ENCODE measurements at regions of chr6 and their contacts with region 1.

Region 1: DNA sequence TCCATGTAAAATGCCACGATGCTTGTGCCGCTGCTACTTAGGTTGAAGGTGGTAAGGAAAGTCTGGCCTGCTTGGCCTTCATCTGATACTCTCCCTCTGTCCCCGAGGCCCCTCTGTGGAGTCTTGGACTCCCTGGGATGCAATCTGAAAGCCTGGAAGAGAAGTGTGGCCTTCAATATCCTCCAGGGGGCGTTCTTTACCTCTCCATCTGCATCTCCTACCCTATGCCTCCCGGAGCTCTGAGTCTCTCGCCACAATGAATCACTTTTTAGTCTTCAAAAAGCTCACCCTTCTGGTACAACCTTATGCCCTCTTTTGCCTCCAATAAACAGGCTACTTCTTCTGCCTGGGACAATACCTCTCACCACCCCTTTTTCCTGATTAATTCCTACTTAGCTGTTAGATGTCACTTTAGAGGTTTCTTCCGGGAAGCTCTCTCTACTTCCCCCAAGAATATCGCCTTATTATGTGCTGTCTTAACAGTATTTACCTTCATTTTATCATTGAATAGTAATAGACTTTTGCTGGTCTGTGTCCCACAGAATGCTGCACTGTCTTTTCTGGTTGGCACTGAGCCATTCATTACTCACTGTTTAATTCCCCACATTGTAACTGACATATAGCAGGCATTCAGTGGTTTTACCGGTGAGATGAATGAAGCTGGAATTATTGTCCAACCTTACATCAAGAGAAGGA is 13.9 kb upstream of the ATG5 start:
- DNase-seq: peak; percentile 65 to 75
- H3K4me3 ChIP-seq: no peak overlapping the region
- H3K27ac ChIP-seq: peak overlapping the region; percentile 18; the same call in 1 of the 2 replicates
- H3K4me1 ChIP-seq: peaks cover 9% of the 10 kb centered on the region
- H3K27me3 ChIP-seq: no peaks in the 10 kb centered on the region
- CTCF ChIP-seq: peak; percentile 90

Region 2: GRCh38 chr6:106056060-106056745 is 283.3 kb before region 1 on chr6:
- CTCF ChIA-PET with region 1: no interaction called
- POLR2A ChIA-PET with region 1: no interaction called
- intact Hi-C with region 1: no loop called
- DNase-seq: no peak
- H3K4me3 ChIP-seq: no peak overlapping the region
- H3K27ac ChIP-seq: no peak overlapping the region
- H3K4me1 ChIP-seq: no peaks in the 10 kb centered on the region
- H3K27me3 ChIP-seq: no peaks in the 10 kb centered on the region
- CTCF ChIP-seq: no peak

Region 3: DNA sequence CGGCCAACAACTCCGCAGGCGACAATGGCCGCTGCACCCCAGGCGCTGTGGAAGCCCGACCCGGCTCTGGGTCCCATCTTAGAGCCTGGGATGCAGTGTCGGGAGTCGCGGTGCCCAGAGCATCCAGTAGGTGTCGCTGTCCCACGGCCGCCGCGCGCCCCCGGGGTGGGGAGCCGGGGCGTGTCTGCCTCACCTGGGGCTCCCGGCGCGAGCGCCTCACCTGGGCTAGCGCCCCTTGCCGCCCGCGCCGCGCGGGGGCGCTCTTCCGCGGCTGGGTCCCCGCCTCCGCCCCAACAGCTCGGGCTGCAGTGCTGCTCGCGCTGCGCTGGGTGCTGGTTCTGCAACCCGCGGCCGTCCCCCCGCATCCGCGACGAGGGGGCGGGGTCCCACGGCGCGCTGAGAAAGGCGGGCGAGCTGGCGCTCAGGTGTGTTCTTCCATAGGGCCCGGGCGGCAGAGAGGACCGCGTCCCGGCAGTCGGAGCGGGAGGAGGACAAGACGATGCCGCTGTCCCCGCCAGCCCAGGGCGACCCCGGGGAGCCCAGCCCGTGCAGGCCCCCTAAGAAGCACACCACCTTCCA is 21.0 kb after region 1 on chr6 and contains the start of gene CRYBG1:
- CTCF ChIA-PET with region 1: interaction called, 4 read pairs
- POLR2A ChIA-PET with region 1: interaction called, 6 read pairs
- intact Hi-C with region 1: loop called (anchors 1 kb)
- DNase-seq: peak; percentile 75 to 94
- H3K4me3 ChIP-seq: peak within 1 kb of the TSS; percentile 86
- H3K27ac ChIP-seq: peak within 1 kb of the TSS; percentile 34; the same call in 1 of the 2 replicates
- H3K4me1 ChIP-seq: peaks cover 11% of the 10 kb centered on the region
- H3K27me3 ChIP-seq: no peaks in the 10 kb centered on the region
- CTCF ChIP-seq: peak; percentile 93
- total RNA-seq, gene CRYBG1: 42.7 and 49.3 TPM in 2 replicates

Region 4: DNA sequence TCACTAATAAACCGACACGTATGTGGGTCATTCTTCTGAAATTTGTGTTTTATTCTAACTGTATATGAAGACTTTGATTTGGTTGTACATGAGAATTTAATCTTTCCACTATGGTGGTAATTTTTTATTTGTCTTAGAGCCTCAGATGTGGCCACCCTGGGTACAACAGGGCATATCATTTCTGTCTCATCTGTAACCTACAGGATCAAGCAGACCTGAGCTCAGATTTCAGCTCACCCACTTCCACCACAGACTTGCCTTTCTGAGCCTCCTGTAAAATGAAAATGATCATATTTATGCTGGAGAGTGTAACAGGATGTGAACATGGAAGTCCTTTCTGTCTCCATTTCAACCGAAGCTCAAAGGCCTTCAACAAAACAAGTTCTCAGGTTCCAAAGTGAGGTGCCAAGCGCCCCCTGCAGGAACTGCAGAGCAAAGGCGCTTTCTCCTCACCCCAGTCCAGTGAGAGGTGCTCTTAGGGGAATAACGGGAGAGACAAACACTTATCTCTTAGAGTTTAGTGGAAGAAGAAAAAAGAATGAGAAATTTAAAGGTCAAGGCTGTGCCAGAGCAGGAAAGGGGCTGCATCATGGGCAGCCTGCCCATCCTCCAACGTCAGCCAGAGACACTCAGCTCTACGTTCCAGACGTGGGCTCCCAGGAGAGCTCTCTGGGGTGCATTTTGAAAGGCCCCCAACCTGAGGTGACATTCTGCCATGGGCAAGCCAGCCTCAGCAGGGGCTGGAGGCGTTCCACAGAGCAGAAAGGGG is 658.1 kb after region 1 on chr6:
- CTCF ChIA-PET with region 1: interaction called, 8 read pairs
- POLR2A ChIA-PET with region 1: no interaction called
- intact Hi-C with region 1: loop called (anchors 5 kb)
- DNase-seq: peak; percentile 57
- H3K4me3 ChIP-seq: no peak overlapping the region
- H3K27ac ChIP-seq: no peak overlapping the region
- H3K4me1 ChIP-seq: no peaks in the 10 kb centered on the region
- H3K27me3 ChIP-seq: no peaks in the 10 kb centered on the region
- CTCF ChIP-seq: peak; percentile 94

Region 5: DNA sequence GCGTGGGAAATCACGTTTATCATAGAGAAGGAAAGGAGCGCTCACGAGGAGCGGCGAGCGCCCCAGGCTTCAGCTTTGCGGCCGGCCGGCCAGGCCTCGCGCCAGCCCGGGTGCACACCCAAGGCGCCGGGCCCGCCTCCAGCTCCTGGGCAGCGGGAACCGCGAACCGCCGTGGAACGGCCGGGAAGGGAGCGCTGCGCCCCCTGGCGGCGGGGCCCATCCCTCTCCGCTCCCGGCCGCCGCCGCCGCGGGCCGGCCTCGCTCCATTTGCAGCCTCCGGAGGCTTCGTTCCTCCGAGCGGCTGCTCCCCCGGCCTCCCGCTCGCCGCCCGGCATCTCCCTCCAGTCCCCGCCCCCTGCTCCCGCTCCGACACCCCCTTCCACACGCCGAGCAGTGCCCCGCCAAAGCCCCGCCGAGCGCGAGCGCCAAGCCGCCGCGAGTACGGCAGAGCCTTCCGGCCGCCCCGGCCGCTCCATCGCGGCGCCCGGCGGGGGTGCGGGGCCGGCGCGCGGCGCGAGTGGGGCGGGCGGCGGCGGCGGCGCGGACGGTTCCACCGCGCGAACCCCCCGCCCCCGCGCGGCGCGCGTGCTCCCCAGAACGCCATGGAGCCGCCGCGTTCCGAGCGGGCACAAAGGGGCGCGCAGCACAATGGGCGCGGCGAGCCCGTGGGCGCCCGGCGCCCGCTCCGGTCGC is 774.9 kb after region 1 on chr6:
- CTCF ChIA-PET with region 1: interaction called, 4 read pairs
- POLR2A ChIA-PET with region 1: no interaction called
- intact Hi-C with region 1: loop called (anchors 5 kb)
- DNase-seq: peak; percentile 61 to 87
- H3K4me3 ChIP-seq: peak overlapping the region; percentile 58
- H3K27ac ChIP-seq: no peak overlapping the region
- H3K4me1 ChIP-seq: peaks cover 8% of the 10 kb centered on the region; the same call in 1 of the 2 replicates
- H3K27me3 ChIP-seq: no peaks in the 10 kb centered on the region
- CTCF ChIP-seq: peak; percentile 65

Region 6: DNA sequence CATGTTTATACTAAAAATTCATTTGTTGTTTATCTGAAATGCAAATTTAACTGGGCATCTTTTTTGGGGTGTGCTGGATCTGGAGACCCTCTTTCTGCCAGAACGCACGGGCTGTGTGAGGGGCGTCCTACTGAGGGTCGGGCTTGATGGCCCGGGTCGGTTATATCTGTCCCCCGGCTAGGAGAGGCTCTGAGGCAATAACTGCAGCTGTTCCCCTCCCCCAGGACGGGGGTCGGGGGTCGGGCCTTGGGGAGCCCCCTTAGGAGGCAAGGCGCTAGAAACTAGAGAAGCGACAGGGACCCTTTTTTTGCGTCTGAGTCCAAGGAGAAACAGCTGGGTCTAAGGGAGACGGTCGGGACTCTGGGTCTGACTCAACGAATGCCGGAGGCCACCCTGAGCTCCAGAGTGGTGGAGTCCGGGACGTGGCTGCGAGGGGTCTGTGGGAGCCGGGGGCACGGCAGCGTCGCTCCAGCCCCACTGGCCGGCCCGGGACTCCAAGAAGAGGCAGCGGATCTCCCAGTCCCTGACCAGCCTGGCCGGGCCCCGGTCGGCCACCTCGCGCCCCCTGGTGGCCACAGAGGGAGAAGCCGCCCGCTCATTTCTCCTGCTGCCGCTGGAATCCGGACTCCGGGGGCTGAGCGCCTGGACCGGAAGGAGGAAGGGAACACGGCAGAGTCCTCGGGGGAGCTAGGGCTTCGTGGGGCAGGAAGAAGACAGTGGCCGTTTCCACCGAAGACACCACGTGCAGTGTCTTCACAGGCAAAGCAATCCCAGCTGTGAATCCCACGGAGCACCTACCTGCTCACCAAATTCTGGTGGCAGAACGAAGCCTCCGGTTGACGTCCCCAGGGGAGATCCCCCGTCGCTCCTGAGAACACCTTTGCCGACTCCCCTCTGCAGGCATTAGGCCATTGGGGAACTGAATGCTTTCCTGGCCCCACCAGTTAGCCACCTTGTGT is 1508.6 kb after region 1 on chr6:
- CTCF ChIA-PET with region 1: no interaction called
- POLR2A ChIA-PET with region 1: no interaction called
- intact Hi-C with region 1: loop called (anchors 5 kb)
- DNase-seq: peak; percentile 52 to 83
- H3K4me3 ChIP-seq: peak overlapping the region; percentile 51
- H3K27ac ChIP-seq: no peak overlapping the region
- H3K4me1 ChIP-seq: no peaks in the 10 kb centered on the region
- H3K27me3 ChIP-seq: no peaks in the 10 kb centered on the region
- CTCF ChIP-seq: peak; percentile 97

Measured in PC-9 (cell line).